A673 (cell line): ENCODE measurements at regions of chr1 and their contacts with region 1.

Region 1: DNA sequence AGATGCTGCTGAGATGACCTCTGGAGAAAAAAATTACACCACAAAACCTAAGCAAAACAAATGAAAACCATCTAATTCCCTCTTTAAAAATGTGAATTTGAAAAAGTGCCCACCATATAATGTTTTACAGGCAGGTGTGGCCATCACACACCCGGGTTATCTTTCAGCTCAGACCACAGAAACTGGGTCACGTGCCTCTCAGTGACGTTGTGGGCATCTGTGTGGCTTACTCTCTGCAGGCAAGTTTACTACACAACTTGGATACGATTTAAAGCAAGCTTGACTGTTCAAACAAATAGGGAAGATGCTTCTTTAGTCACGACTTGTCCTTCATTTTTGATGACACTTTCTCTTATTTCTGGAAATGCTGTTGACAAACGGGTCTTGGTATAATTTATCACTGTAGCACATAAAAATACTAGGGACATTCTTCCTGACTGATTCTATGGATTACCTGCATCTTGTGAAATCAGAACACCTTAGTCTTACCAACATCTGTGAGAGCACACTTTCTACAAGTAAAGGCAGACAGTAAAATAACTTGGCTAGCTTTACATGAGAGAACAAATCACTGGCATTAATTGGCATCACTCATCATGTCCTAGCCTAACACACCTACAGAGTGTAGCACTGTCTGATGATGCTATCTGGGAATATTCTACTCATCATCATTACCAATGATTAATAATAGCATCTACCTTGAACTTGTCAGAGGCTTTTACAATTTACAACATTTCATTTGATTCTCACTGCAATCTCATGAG is 89.3 kb upstream of the EDEM3 start:
- DNase-seq: no peak
- H3K4me3 ChIP-seq: no peak overlapping the region
- H3K27ac ChIP-seq: no peak overlapping the region
- H3K4me1 ChIP-seq: peaks cover under 1% of the 10 kb centered on the region
- H3K27me3 ChIP-seq: no peaks in the 10 kb centered on the region
- CTCF ChIP-seq: no peak

Region 2: DNA sequence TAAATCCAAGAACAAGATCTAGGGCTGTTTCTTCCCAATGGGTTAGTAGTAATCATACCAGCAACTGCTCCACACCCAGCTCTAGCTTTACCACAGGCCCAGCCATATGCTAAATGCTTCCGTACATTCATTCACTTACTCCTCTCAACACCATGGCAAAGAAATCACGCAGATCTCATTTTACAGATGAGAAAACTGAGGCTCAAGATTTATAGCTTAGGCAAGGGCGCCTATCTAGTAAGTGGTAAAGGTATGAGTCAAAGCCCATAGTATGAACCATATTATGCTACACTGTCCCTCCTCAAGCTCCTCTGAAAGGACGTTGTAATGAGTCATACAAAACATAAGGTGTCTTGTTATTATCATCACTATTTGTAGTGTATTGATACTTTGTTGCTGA is 48.2 kb after region 1 on chr1:
- CTCF ChIA-PET with region 1: no interaction called
- POLR2A ChIA-PET with region 1: interaction called, 13 read pairs
- intact Hi-C with region 1: no loop called
- DNase-seq: no peak
- H3K4me3 ChIP-seq: no peak overlapping the region
- H3K27ac ChIP-seq: no peak overlapping the region
- H3K4me1 ChIP-seq: peaks cover 23% of the 10 kb centered on the region
- H3K27me3 ChIP-seq: no peaks in the 10 kb centered on the region
- CTCF ChIP-seq: no peak